Right ventricle myocardium superior (tissue), 1 donor: ENCODE measurements at regions of chr4 and their contacts with region 1.

Region 1: DNA sequence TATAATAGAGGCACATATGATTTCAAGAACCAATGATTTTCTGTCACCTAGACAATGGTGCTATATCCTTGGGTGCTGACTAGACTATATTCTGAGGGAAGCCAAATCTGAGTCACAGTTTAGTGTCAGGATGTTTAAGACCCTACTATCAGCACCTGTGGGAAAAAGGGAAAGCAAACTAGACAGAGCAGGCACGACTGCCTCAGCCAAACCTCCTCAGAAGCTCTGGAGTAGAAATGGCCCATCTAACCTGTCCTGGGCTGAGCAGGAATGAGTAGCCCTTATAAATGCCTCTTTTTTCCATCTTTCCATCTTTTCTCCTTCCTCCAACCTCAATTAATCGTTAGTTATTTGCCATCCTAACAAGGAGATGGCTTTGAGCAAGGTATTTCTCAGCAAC is 80.4 kb upstream of the TECRL start:
- DNase-seq: no peak
- ATAC-seq: peak; percentile 40

Region 2: GRCh38 chr4:64341711-64342110 is 147.9 kb before region 1 on chr4:
- intact Hi-C with region 1: no loop called
- DNase-seq: peak; percentile 78
- ATAC-seq: peak; percentile 93

Region 3: GRCh38 chr4:64417974-64418373 is 71.7 kb before region 1 on chr4:
- intact Hi-C with region 1: loop called (anchors 5 kb)
- DNase-seq: no peak
- ATAC-seq: peak; percentile 96

Region 4: DNA sequence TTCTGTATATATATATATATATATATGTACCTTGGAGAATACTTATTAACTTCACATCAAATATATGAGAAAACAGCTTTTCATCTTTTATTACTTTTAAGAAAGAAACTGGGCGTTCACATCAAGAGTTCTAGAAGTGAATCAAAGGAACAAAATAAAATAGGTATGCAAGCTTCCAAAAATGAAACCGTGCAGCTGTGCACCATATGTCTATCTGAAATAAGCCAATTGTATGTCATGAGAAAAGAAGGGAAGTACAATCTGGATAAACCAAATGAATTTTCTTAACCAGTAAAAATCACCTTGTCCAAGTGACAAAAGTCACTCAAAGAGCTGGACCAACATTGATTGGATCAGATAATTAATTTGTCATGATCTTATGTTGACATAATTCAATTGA is 325.0 kb after region 1 on chr4:
- intact Hi-C with region 1: no loop called
- DNase-seq: no peak
- ATAC-seq: no peak